CD8-positive, alpha-beta T cell (primary cell): ENCODE measurements at regions of chr2 and their contacts with region 1.

Region 1: DNA sequence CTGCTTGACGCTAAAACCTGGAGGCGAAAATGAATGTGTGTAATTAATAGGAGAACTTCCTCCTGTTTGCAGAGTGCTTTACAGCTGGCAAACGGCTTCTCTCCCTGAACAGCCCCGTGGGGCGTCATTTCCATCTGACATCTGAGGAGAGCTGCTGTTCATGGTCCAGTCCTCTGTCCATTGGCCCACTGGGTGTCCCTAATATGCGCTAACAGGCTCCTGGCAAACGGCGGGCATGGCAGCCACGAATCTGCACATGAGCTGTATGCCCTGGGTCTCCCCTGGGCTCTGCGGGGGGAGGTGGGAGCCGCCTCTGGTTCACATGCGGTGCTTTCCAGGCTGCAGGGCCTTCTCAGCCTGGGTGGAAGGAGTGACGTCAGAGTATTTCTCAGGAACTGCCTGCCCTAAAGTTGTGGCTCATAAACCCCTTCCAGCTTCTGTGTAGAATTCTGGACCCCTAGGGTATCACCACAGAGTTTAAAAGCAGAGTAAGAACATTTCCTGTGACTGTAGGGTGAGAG is 73.2 kb downstream of the LRRFIP1 start:
- DNase-seq: peak in 6 of 9 experiments; percentile 40 to 93 (median 80)
- ATAC-seq: peak; percentile 76
- H3K4me3 ChIP-seq: no peak overlapping the region
- H3K4me3 Mint-ChIP-seq: peak overlapping the region; percentile 80
- H3K27ac ChIP-seq: peak overlapping the region; percentile 42 to 70
- H3K27ac Mint-ChIP-seq: peak overlapping the region; percentile 94
- H3K4me1 ChIP-seq: peaks cover 99% of the 10 kb centered on the region
- H3K4me1 Mint-ChIP-seq: peaks cover 95% of the 10 kb centered on the region
- H3K27me3 ChIP-seq: no peaks in the 10 kb centered on the region
- H3K27me3 Mint-ChIP-seq: no peaks in the 10 kb centered on the region
- CTCF ChIP-seq: no peak

Region 2: DNA sequence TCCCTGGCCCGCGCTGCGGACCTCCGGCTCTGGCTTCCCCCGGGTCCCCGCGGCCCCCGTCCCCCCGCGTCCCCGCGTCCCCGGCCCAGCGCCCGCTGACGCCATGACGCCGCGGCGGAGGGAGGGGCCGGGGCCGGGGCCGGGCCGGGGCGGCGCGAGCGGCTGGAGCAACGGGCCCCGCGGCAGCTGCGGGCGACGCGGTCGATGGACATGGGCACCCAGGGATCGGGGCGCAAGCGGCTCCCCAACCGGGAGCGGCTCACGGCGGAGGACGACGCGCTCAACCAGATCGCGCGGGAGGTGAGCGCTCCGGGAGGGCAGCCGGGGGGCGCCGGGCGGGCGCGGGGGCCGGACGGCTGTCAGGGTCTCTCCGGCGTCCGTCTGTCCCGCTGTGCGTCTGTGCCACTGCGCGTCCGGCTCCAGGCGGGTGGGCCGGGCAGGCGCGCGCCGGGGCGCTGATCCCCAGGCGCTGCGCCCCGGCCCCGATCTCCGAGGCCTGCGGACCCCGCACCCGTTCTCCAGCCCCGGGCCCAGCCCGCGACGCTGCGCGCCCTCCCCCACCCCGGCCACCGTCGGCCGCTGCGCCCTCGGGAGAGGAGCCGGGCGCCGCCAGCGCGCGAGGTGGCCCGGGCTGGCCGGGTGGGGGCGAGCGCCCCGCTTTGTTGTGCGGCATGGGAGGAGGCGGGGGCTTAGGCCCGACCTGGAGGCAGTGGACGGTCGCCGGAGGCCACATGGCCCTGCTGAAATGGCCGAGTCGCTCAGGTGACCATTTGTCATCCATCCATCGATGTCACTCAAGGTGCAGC is 72.9 kb before region 1 on chr2 and contains the start of gene LRRFIP1:
- CTCF ChIA-PET with region 1: no interaction called
- POLR2A ChIA-PET with region 1: no interaction called
- intact Hi-C with region 1: no loop called
- DNase-seq: peak in 3 of 9 experiments; percentile 20 to 32 (median 26)
- ATAC-seq: peak; percentile 72
- H3K4me3 ChIP-seq: peak within 1 kb of the TSS; percentile 24 to 29
- H3K4me3 Mint-ChIP-seq: peak within 1 kb of the TSS; percentile 88
- H3K27ac ChIP-seq: no peak within 1 kb of the TSS
- H3K27ac Mint-ChIP-seq: peak within 1 kb of the TSS; percentile 83
- H3K4me1 ChIP-seq: peaks cover 8% of the 10 kb centered on the region
- H3K4me1 Mint-ChIP-seq: peaks cover 26% of the 10 kb centered on the region
- H3K27me3 ChIP-seq: peaks cover 0 to 6% of the 10 kb centered on the region in 2 experiments
- H3K27me3 Mint-ChIP-seq: peaks cover 20% of the 10 kb centered on the region
- CTCF ChIP-seq: no peak
- total RNA-seq, gene LRRFIP1: 127 to 128 TPM

Region 3: DNA sequence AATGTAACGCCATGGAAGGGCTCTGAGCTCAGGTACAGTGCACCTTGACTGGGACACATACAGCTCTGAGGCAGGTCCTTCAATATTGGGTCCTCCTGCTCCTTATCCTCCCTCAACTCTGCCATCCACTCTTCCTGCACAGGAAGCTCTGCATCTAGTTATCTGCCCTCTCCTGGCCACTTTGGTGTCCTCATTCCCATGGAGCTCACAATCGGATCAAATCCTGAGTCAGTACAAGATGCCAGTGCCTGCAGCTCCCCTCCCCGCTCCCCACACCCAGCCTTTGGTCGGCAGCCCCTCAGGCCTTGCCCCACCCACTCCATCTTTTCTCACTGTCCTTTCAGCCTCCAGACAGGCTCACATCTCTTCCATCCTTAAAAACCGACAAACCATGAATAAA is 15.2 kb before region 1 on chr2:
- CTCF ChIA-PET with region 1: interaction called, 22 read pairs
- POLR2A ChIA-PET with region 1: interaction called, 8 read pairs
- intact Hi-C with region 1: loop called in 1 of 2 experiments (anchors 1 kb)
- DNase-seq: no peak
- ATAC-seq: no peak
- H3K4me3 ChIP-seq: no peak overlapping the region
- H3K4me3 Mint-ChIP-seq: no peak overlapping the region
- H3K27ac ChIP-seq: no peak overlapping the region
- H3K27ac Mint-ChIP-seq: peak overlapping the region; percentile 80
- H3K4me1 ChIP-seq: peaks cover 36% of the 10 kb centered on the region
- H3K4me1 Mint-ChIP-seq: peaks cover 43% of the 10 kb centered on the region
- H3K27me3 ChIP-seq: no peaks in the 10 kb centered on the region
- H3K27me3 Mint-ChIP-seq: no peaks in the 10 kb centered on the region
- CTCF ChIP-seq: no peak

Region 4: GRCh38 chr2:237714690-237715458 is 14.3 kb after region 1 on chr2:
- CTCF ChIA-PET with region 1: interaction called, 4 read pairs
- POLR2A ChIA-PET with region 1: interaction called, 5 read pairs
- intact Hi-C with region 1: loop called in 1 of 2 experiments (anchors 2 kb)
- DNase-seq: no peak
- ATAC-seq: no peak
- H3K4me3 ChIP-seq: no peak overlapping the region
- H3K4me3 Mint-ChIP-seq: peak overlapping the region; percentile 29
- H3K27ac ChIP-seq: no peak overlapping the region
- H3K27ac Mint-ChIP-seq: peak overlapping the region; percentile 28
- H3K4me1 ChIP-seq: peaks cover 10% of the 10 kb centered on the region
- H3K4me1 Mint-ChIP-seq: peaks cover 56% of the 10 kb centered on the region
- H3K27me3 ChIP-seq: no peaks in the 10 kb centered on the region
- H3K27me3 Mint-ChIP-seq: no peaks in the 10 kb centered on the region
- CTCF ChIP-seq: no peak